Activated CD8-positive, alpha-beta memory T cell treated with anti-CD3 and anti-CD28 coated beads, Interleukin-2, amount 10 ng/mL, durations not matched to agents 7 days and 5 days (primary cell): ENCODE measurements at regions of chr10 and their contacts with region 1.

Region 1: DNA sequence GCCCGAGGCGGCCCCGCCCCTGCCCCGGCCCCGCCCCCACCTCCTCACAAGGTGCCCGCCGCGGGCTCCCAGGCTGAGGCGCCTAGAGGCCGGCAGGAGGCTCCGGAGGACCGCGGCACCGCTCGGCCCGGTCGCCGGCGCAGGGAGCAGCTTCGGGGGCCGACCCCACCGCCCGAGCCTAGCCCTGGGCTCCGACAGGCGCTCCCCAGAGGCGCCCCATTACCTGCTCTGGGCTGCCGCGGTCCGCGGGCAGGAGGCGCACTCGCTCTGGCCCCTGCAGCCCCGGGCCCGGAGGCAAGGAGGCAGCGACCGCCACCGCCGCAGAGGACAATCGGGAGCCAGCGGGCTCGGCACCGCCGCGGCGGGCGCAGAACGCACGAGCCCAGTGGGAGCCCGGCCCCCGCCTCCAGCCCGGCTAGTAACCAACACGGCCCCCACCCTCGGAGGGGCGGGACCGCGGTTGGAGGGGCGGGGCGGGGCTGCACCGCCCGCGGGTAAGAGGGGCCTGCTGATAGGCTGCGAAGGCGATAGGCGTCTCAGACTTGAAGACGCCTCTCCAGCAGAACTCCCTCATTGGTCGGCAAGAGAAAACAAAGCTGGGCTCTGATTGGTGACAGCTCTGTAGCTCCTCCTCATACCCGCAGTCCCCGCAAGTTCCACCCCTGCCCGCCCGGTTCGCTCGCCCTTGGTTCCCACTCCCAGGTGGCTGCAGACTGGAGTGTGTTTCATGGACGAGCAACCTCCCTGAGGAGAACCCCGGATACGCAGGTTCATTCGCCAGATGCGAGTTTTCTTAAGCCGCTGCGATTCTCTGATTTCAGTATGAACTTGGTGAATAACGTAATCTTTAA is at the start of gene MPP7:
- DNase-seq: peak; percentile 96
- ATAC-seq: peak; percentile 98
- H3K4me3 Mint-ChIP-seq: peak within 1 kb of the TSS; percentile 88
- H3K27ac Mint-ChIP-seq: peak within 1 kb of the TSS; percentile 72
- H3K4me1 Mint-ChIP-seq: peaks cover 30% of the 10 kb centered on the region
- H3K27me3 Mint-ChIP-seq: peaks cover 32% of the 10 kb centered on the region
- total RNA-seq, gene MPP7: 1.4 to 3.7 TPM

Region 2: DNA sequence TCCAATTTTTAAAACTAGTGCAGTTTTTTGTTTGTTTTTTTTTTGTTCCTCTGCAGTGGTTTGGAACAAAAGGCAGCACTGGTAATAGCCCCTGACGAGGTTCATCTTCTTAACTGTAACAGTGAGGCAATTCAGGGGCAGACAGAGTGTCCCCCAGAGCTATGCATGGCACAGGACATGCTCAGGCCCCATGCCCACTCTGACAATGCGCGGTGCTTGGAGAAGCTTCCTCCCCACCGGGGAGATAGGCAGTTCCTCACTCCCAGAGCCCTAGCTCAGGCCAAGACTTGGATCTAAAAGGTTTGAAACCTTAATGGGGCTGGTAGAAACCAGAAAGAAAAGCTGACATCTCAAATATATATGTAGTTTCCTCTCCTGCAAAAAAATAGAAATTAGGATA is 17.9 kb after region 1 on chr10:
- CTCF ChIA-PET with region 1: interaction called, 22 read pairs
- DNase-seq: no peak
- ATAC-seq: no peak
- H3K4me3 Mint-ChIP-seq: no peak overlapping the region
- H3K27ac Mint-ChIP-seq: no peak overlapping the region
- H3K4me1 Mint-ChIP-seq: peaks cover 2% of the 10 kb centered on the region
- H3K27me3 Mint-ChIP-seq: no peaks in the 10 kb centered on the region

Region 3: DNA sequence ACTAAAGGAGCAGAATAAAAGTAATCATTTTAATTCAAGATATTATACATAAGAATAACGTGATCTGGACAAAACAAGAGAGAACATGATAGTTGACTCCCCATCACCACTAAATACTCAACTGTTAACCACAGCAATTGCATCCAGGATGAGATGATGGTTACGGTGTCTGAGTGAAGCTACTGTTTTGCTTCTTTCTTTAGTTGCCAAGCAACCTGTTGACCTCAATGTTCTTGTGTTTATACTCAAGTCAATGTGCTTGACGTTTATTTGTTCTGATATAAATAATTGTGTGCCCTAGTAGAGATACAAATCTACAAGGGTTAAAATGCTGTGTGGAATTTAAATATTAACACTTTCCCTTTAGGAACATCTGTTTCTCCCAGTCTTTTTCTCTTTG is 31.4 kb after region 1 on chr10:
- CTCF ChIA-PET with region 1: interaction called, 51 read pairs
- DNase-seq: peak; percentile 80
- ATAC-seq: peak; percentile 69
- H3K4me3 Mint-ChIP-seq: peak overlapping the region; percentile 82
- H3K27ac Mint-ChIP-seq: peak overlapping the region; percentile 99
- H3K4me1 Mint-ChIP-seq: peaks cover 57% of the 10 kb centered on the region
- H3K27me3 Mint-ChIP-seq: peaks cover 10% of the 10 kb centered on the region

Region 4: DNA sequence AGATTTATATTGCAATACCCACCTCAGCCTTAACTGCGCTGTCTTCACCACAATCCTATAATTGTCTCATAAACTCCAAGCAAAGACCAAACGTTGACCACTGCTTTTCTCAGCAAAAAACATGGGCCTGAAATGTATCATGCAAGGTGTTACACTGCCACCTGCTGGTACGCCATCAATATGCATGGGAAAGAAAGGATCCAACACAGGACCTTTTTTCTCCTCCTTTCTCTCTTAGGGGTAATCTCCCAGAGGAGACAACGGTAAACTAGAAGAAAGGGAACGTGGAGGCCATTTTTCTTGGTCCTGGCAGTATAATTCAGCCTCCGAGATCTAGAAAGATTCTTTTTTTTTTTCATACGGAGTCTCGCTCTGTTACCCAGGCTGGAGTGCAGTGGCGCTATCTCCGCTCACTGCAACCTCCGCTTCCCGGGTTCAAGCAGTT is 79.1 kb after region 1 on chr10:
- CTCF ChIA-PET with region 1: interaction called, 111 read pairs
- DNase-seq: peak; percentile 89
- ATAC-seq: peak; percentile 93
- H3K4me3 Mint-ChIP-seq: no peak overlapping the region
- H3K27ac Mint-ChIP-seq: no peak overlapping the region
- H3K4me1 Mint-ChIP-seq: peaks cover 20% of the 10 kb centered on the region
- H3K27me3 Mint-ChIP-seq: peaks cover 18% of the 10 kb centered on the region

Region 5: DNA sequence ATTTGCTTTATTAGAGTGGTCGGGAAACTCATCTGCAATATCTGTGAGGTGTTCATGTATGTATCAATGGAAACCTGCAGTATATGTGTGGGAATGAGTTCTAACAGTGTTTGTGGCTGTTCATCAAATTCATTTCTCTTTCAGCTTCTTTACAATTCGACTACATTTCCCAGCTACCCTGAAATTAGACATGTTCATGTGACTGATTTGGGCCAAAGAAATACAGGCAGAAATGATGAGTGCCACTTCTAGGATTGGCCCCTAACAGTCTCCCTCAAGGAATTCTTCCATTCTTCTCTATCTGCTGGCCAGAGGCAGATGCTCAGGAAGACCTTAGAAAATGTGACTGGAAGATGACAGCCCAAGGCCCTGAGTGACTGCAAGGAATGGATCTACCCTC is 115.2 kb after region 1 on chr10:
- CTCF ChIA-PET with region 1: no interaction called
- DNase-seq: no peak
- ATAC-seq: no peak
- H3K4me3 Mint-ChIP-seq: no peak overlapping the region
- H3K27ac Mint-ChIP-seq: no peak overlapping the region
- H3K4me1 Mint-ChIP-seq: no peaks in the 10 kb centered on the region
- H3K27me3 Mint-ChIP-seq: peaks cover 25% of the 10 kb centered on the region